ENCODE measurements at regions of chr3 and their contacts with region 1.

Region 1: DNA sequence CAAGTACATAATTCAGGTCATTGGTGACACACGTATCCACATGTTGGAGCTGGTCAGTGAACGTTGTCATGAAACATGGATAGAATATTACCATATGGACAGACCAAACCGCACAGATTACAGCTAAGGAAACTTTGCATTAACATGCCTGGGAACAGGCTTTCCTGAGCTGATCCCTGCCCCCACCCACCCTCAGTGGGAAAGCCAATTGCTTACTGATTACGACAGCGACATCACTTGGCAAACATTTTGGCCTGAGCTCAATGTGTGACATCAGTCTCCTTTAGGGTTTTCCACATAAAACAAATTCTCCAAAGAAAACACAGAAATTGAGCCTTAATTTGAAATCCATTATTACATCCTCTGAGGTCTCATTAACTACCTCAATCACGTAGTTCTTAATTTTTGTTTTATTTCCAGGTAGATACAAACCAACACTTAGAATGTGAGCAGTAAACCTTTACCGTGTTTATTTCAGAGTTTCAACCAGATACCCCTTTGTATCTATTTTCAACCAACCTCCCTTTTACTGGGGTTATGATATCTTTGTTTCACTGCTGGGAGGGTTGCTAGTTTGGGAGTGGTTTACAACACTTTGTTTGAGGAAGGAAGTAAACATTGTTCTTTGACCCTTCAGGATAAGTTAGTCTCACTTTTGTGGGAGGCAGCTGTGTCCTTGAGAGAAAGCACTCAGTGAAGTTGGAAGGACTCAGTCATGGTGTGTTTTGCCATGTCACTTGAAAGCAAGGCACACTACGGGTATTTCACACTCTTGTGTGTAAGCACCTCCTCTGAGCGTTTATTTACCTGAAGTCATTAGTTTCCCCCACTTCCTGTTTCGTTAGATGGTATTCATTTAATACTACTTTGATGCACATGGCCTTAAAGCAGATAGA is 103.1 kb downstream of the CMSS1 start:
- DNase-seq: peak; percentile 68
- ATAC-seq: peak; percentile 79

Region 2: GRCh38 chr3:99366663-99367429 is 553.9 kb before region 1 on chr3:
- intact Hi-C with region 1: no loop called
- DNase-seq: no peak
- ATAC-seq: no peak

Region 3: DNA sequence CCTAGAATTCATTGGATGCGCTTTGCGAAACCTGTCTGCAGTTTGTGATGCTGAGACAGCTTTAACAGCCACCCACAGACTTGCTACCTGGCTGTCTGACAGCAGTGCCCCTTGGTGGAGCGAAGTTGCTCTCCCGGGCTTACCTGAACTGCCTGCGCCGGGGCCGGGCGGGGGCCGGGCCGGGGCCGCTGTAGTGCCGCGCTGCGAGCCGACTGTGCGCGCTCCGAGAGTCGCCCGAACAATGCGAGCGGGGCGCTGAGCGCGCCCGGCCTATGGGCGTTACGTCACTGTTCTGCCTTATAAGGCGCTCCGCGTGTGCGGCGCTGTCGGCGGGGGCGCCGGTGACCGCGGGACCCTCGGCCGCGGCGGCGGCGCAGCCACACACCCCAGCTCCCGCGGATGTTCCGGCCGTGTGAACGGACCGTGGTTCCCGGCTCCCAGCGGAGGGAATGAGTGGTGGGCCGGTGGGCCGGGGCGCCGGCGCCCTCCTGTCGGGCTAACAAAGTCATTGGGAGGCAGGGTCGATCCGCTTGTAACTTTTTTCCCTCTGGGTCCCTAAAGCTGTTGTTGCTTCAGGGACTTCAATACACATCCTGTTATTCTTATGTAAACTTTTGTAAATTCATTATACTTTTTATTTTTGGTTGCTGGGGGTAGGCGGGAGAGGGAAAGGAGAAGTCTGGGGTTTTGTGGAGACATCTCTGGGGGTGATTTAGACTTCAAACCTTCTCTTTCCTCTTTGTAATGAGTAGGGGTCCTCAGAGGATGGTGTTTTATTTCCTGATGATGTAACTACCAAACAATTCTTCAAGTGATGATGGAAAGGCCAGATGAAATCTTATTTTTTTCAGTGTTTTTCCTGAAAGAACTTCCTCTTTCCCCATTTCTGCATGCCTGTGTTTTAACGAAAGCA is 44.5 kb before region 1 on chr3:
- intact Hi-C with region 1: loop called (anchors 2 kb)
- DNase-seq: peak; percentile 92
- ATAC-seq: peak; percentile 97

Measured in Right ventricle myocardium inferior (tissue), 1 donor.